AG04449 (cell line): ENCODE measurements at regions of chr2 and their contacts with region 1.

Region 1: GRCh38 chr2:134245340-134245984 is 8.4 kb upstream of the MGAT5 start:
- DNase-seq: no peak
- H3K4me3 ChIP-seq: no peak overlapping the region
- CTCF ChIP-seq: peak; percentile 82

Region 2: DNA sequence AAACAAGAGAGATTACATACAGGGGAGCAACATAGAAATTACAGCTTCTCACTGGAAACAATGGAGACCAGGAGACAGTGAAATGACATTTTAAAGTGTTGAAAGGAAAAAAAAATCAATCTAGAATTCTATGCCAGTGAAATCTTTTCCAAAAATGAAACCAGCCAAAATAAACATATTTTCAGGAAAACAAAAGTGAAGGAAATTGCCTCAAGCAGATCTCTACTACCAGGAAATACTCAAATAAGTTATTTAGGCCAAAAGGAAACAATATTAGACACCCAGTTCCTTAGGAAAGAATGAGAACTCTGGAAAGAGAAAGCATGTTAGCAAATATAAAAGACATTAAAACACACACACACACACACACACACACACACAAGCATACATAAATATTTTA is 337.3 kb before region 1 on chr2:
- CTCF ChIA-PET with region 1: no interaction called
- POLR2A ChIA-PET with region 1: no interaction called
- DNase-seq: no peak
- H3K4me3 ChIP-seq: no peak overlapping the region
- CTCF ChIP-seq: no peak

Region 3: GRCh38 chr2:134169788-134170187 is 75.7 kb before region 1 on chr2:
- CTCF ChIA-PET with region 1: interaction called, 11 read pairs
- POLR2A ChIA-PET with region 1: no interaction called
- DNase-seq: no peak
- H3K4me3 ChIP-seq: no peak overlapping the region
- CTCF ChIP-seq: no peak

Region 4: DNA sequence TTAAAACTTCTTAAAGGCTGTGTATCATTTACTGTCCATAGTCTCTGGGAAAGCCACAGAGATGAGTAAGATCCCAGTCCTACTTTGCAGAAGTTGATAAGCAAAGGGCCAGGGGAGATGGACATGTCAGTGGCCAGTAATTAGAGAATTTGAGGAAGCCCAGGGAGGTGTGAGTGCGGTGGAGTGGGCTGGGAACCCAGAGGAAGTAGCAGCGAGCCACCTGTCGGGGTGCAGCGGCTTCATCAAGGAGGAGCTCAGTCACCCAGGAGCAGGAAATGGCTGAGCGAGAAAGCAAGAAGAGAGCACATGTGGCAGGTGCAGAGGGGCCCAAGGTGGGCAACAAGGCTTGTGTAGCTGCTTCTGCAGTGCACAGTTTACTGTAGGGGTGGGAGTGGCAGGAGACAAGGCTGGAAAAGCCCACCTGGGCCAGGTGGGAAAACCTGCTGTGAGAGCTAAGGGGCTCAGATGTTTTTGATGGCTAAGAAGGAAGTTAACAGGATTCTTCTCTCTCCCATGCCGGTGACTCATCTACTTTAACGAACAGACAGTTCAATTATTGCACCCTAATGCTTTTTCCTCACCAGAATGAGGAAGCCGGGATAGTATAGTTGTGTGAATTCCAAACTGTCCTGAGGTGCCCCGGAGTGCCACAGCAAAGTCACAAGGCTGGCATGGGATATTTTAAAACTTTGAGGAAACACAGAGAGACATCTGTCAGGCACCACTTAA is 26.4 kb before region 1 on chr2:
- CTCF ChIA-PET with region 1: interaction called, 13 read pairs
- POLR2A ChIA-PET with region 1: no interaction called
- DNase-seq: no peak
- H3K4me3 ChIP-seq: no peak overlapping the region
- CTCF ChIP-seq: no peak

Region 5: GRCh38 chr2:134261398-134262131 is 16.1 kb after region 1 on chr2:
- CTCF ChIA-PET with region 1: interaction called, 73 read pairs
- POLR2A ChIA-PET with region 1: no interaction called
- DNase-seq: no peak
- H3K4me3 ChIP-seq: no peak overlapping the region
- CTCF ChIP-seq: no peak

Region 6: DNA sequence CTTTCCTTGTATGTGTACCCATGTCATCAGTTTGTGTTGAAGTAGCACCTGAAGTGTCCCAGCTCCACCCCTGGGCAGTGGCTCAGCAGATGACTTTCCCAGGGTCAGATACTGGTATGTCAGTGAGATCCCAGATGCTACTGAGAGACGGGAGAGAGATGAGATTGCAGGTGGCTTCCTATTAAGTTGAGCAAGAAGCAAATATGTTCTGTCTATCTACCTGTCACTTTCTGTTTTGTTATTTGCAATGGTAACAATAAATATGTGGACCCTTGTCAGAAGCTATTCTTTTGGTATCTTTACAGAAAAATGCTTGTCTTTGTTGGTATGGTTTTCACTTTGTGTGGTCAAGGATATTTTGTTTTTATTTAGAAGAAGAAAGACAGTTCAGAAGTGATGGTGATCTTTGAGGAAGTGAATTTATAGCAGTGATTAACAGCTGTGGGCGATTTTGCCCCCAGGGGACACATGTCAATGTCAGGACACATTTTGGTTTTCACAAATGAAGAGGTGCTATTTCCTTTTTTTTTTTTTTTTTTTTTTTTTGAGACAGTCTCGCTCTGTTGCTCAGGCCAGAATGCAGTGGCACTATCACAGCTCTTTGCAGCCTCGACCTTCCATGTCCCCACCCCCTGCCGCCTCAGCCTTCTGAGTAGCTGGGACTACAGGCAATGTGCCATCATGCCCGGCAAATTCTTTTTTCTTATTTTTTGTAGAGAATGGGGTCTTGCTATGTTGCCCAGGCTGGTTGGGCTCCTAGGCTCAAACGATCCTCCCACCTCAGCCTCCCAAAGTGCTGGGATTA is 29.8 kb after region 1 on chr2:
- CTCF ChIA-PET with region 1: interaction called, 16 read pairs
- POLR2A ChIA-PET with region 1: no interaction called
- DNase-seq: no peak
- H3K4me3 ChIP-seq: no peak overlapping the region
- CTCF ChIP-seq: no peak

Region 7: DNA sequence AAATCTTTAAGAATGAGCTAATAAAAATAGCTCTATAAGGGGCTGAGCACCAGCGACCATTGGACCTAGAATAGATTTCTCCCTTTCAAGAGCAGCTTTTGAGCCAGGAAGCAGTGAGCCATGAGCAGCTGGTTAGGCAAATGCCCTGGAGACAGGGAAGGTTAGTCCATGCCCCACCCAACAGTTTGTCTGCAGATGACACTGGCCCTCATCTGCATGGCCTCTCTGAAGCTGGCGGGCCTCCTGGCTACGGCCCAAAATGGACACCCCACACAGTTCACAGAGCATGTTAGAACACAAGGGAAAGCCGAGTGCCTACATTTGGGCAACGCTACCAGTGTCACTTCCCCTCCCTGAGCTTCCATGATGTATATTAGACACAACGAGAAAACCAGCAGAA is 209.5 kb after region 1 on chr2:
- CTCF ChIA-PET with region 1: interaction called, 15 read pairs
- POLR2A ChIA-PET with region 1: no interaction called
- DNase-seq: no peak
- H3K4me3 ChIP-seq: no peak overlapping the region
- CTCF ChIP-seq: no peak